ENCODE measurements at regions of chr13 and their contacts with region 1.

Region 1: GRCh38 chr13:44306401-44307192 is 67.0 kb upstream of the SERP2 start:
- DNase-seq: peak; percentile 82

Region 2: GRCh38 chr13:44191504-44192171 is 115.0 kb before region 1 on chr13:
- intact Hi-C with region 1: loop called (anchors 5 kb)
- DNase-seq: no peak

Region 3: GRCh38 chr13:44237276-44237767 is 69.3 kb before region 1 on chr13:
- intact Hi-C with region 1: loop called (anchors 2 kb)
- DNase-seq: no peak

Region 4: DNA sequence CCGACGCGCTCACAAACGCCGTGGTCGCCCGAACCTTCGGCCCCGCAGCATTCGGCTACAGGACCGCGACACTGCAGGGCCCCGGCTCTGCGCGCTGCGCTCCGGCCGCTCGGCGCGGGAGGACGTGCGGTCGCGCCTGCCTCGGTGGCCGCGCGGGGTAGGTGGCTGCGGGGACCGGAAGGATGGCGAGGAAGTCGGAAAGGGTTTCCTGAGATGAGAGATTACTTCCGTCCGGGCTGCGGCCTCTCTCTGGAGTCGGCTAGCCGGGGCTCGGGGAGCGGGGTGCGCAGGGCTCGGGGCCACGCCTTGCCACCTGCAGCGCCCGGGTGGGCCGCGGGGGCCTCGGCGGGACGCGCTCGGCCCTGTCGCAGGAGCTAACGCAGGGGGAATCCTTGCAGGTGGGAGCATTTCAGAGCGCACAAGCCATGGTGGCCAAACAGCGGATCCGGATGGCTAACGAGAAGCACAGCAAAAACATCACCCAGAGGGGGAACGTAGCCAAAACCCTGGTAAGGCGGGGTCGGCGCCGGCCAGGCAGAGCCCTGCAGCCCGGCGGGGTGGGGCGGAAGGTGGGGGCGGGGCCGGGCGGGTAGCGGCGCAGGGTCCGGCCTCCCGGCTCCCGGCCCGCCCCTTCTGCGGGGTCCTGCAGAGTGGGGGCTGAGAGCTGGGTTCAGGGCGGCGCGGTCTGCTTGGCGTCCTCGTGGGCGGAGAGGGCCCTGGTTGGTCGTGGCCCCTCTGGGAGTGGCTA is 67.2 kb after region 1 on chr13 and contains the start of gene SERP2:
- intact Hi-C with region 1: loop called (anchors 5 kb)
- DNase-seq: no peak
- total RNA-seq, gene SERP2: 7.9 TPM

Measured in cardiac septum (tissue), 1 donor.